ENCODE measurements at regions of chr9 and their contacts with region 1.

Region 1: GRCh38 chr9:33623658-33624586 is 99.9 kb downstream of the ANKRD18B start:
- DNase-seq: peak; percentile 91
- H3K4me3 Mint-ChIP-seq: no peak overlapping the region
- H3K27ac Mint-ChIP-seq: no peak overlapping the region
- H3K4me1 Mint-ChIP-seq: peaks cover 9% of the 10 kb centered on the region
- H3K27me3 Mint-ChIP-seq: peaks cover 15% of the 10 kb centered on the region

Region 2: DNA sequence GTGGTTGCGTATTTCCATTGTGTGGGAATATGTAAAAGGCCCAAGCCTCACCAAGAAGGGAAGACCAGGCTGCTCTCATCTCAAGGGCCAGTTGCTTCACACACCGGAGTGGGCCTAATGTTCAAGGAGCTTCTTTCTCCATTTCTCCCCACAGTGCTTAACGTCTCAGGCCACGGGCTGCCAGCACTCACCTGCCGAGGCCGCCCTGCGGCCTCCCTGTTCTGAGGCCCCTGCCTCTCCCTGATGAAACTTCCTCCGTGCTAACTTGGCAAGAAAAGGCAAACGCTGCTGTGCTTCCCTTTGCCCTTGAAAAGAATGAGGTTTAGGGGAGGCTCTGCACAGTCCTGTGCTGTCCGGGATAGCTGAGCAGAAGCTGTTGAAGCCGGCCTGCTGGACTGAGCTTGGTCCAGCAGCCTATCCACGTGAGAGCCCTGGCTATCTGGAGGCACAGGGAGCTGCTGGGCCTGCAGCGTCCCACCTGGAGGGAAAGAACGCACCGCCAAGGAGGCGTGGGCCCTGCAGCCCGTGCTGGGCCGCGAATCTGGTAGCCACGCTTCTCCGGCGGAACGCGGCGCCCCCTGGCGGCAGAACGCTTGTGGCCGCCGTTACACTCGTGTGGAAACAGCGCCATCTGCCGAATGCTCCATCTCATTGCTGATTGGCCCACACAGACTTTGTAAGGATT is 97.9 kb after region 1 on chr9:
- intact Hi-C with region 1: loop called (anchors 1 kb)
- DNase-seq: peak; percentile 96
- H3K4me3 Mint-ChIP-seq: no peak overlapping the region
- H3K27ac Mint-ChIP-seq: no peak overlapping the region
- H3K4me1 Mint-ChIP-seq: peaks cover 2% of the 10 kb centered on the region
- H3K27me3 Mint-ChIP-seq: peaks cover 37% of the 10 kb centered on the region